ENCODE measurements at regions of chr5 and their contacts with region 1.

Region 1: DNA sequence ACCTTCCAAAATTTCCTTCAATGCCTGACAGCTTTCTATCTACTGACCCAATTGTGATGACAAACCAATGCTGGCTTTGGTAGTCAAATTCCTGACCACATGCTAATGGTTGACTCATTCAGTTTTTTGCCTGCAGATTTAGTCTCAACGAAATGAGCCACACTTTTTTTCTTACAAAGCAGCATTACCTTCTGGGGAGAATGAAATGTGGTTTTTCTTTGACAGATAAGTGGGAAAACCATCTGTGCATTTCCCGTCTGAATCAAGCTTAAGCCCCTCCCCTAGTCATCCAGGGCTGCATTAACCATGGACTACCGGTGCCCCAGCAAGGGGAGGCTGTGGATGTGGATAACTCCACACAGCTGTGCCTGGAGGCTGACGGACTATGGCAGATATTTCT is 99.6 kb upstream of the TAF11L2 start:
- DNase-seq: peak in 2 of 3 donors; percentile 22 to 58
- H3K4me3 ChIP-seq: no peak overlapping the region
- H3K4me3 Mint-ChIP-seq: no peak overlapping the region
- H3K27ac ChIP-seq: no peak overlapping the region
- H3K27ac Mint-ChIP-seq: peak overlapping the region in 2 of 7 donors; percentile 22 to 68
- H3K4me1 ChIP-seq: peaks cover 42 to 45% of the 10 kb centered on the region in 2 donors
- H3K4me1 Mint-ChIP-seq: peaks cover 46% of the 10 kb centered on the region
- H3K27me3 ChIP-seq: no peaks in the 10 kb centered on the region
- H3K27me3 Mint-ChIP-seq: peaks cover 0 to 5% (median 2%) of the 10 kb centered on the region in 3 donors
- CTCF ChIP-seq: no peak

Region 2: GRCh38 chr5:16983022-16983639 is 415.3 kb before region 1 on chr5:
- intact Hi-C with region 1: no loop called
- DNase-seq: no peak
- H3K4me3 ChIP-seq: no peak overlapping the region
- H3K4me3 Mint-ChIP-seq: no peak overlapping the region
- H3K27ac ChIP-seq: no peak overlapping the region
- H3K27ac Mint-ChIP-seq: no peak overlapping the region
- H3K4me1 ChIP-seq: no peaks in the 10 kb centered on the region
- H3K4me1 Mint-ChIP-seq: no peaks in the 10 kb centered on the region
- H3K27me3 ChIP-seq: peaks cover 0 to 3% of the 10 kb centered on the region in 2 donors
- H3K27me3 Mint-ChIP-seq: peaks cover 16 to 22% (median 18%) of the 10 kb centered on the region in 3 donors
- CTCF ChIP-seq: no peak

Region 3: DNA sequence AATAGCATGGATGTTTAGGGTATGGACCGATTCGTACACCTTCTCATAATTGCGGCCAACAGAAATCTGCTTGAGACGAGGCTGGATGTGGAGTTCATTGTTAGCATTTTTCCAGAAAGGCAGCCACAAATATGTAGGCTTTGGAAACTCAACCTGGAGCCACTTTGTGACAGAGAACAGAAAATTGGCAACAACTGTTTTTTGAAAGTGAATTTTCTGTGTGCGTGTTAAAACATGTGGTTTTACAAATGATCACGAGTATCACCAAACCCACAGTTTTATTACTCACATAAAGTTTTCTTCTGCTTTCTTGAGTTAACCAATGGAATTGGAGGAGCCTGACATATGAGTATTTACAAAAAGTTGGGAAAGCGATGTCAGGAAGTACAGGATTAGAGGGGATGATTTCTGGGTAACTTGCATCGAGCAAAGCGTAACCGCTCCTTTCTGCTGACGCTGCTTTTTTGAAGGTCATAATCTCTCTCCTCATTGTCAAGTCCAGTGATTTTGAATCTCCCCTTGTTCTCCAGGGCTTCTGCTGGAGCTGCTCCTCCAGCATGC is 38.9 kb before region 1 on chr5:
- intact Hi-C with region 1: loop called in 1 of 2 experiments (anchors 5 kb)
- DNase-seq: peak; percentile 55 to 85 (median 71)
- H3K4me3 ChIP-seq: no peak overlapping the region
- H3K4me3 Mint-ChIP-seq: no peak overlapping the region
- H3K27ac ChIP-seq: peak overlapping the region in 1 of 2 donors; percentile 33
- H3K27ac Mint-ChIP-seq: peak overlapping the region in 5 of 7 donors; percentile 11 to 88 (median 72)
- H3K4me1 ChIP-seq: peaks cover 12 to 16% of the 10 kb centered on the region in 2 donors
- H3K4me1 Mint-ChIP-seq: peaks cover 22% of the 10 kb centered on the region
- H3K27me3 ChIP-seq: no peaks in the 10 kb centered on the region
- H3K27me3 Mint-ChIP-seq: peaks cover 0 to 7% (median 2%) of the 10 kb centered on the region in 3 donors
- CTCF ChIP-seq: no peak